Mammary epithelial cell (primary cell): ENCODE measurements at regions of chr4 and their contacts with region 1.

Region 1: GRCh38 chr4:78775303-78776030 is 683 bp upstream of the BMP2K start:
- DNase-seq: peak; percentile 72
- H3K4me3 ChIP-seq: peak overlapping the region; percentile 77 to 91 (median 89)
- H3K27ac ChIP-seq: peak overlapping the region; percentile 90
- H3K4me1 ChIP-seq: peaks cover 8% of the 10 kb centered on the region
- H3K27me3 ChIP-seq: no peaks in the 10 kb centered on the region
- CTCF ChIP-seq: no peak

Region 2: GRCh38 chr4:78612398-78613178 is 162.9 kb before region 1 on chr4:
- CTCF ChIA-PET with region 1: no interaction called
- dilution Hi-C with region 1: no loop called
- in situ Hi-C with region 1: no loop called
- intact Hi-C with region 1: loop called (anchors 2 kb)
- DNase-seq: no peak
- H3K4me3 ChIP-seq: no peak overlapping the region
- H3K27ac ChIP-seq: no peak overlapping the region
- H3K4me1 ChIP-seq: peaks cover 4% of the 10 kb centered on the region
- H3K27me3 ChIP-seq: no peaks in the 10 kb centered on the region
- CTCF ChIP-seq: peak; percentile 33 to 66

Region 3: DNA sequence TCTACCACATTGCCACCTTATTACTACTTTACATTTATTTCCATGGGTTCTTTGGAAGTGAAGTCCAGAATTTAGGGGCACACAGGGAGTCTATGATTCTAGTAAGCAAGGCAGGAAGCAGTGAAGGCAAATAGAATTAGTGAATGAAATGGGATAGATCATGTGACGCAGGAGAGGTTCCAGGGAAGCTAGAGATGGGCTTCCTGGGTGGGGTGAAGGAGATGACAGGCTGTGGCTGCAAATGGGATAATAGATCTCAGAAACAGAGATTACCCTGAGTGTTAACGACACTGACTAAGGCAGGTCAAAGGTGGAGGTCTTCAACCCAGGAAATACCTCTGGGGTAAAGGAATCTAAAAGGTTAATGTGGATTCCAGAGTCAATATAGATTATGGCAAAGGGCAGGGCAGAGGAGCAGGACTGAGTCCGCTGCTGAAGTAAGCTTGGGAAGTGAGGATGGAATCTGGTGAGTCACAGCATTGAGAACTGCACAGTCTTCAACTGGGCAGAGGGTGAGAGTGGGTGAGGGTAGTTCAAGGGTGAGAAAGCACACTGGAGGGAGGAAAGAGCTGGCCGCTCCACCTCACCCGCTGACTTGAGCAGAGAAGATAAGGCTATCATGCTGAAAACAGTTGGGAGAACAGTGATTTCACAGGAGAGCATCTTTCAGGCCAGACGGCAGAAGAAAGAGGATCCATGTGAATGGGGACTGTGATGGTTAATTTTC is 153.1 kb before region 1 on chr4:
- CTCF ChIA-PET with region 1: no interaction called
- dilution Hi-C with region 1: no loop called
- in situ Hi-C with region 1: loop called in 1 of 2 experiments (anchors 10 kb)
- intact Hi-C with region 1: no loop called
- DNase-seq: no peak
- H3K4me3 ChIP-seq: no peak overlapping the region
- H3K27ac ChIP-seq: no peak overlapping the region
- H3K4me1 ChIP-seq: peaks cover 4% of the 10 kb centered on the region
- H3K27me3 ChIP-seq: no peaks in the 10 kb centered on the region
- CTCF ChIP-seq: no peak

Region 4: GRCh38 chr4:78644744-78645330 is 130.6 kb before region 1 on chr4:
- CTCF ChIA-PET with region 1: no interaction called
- dilution Hi-C with region 1: no loop called
- in situ Hi-C with region 1: no loop called
- intact Hi-C with region 1: loop called (anchors 1 kb)
- DNase-seq: peak; percentile 71
- H3K4me3 ChIP-seq: no peak overlapping the region
- H3K27ac ChIP-seq: peak overlapping the region; percentile 79
- H3K4me1 ChIP-seq: peaks cover 28% of the 10 kb centered on the region
- H3K27me3 ChIP-seq: no peaks in the 10 kb centered on the region
- CTCF ChIP-seq: peak; percentile 98 to 99

Region 5: GRCh38 chr4:78710536-78710935 is 64.9 kb before region 1 on chr4:
- CTCF ChIA-PET with region 1: no interaction called
- dilution Hi-C with region 1: no loop called
- in situ Hi-C with region 1: no loop called
- intact Hi-C with region 1: loop called (anchors 2 kb)
- DNase-seq: peak; percentile 89
- H3K4me3 ChIP-seq: no peak overlapping the region
- H3K27ac ChIP-seq: no peak overlapping the region
- H3K4me1 ChIP-seq: no peaks in the 10 kb centered on the region
- H3K27me3 ChIP-seq: no peaks in the 10 kb centered on the region
- CTCF ChIP-seq: no peak

Region 6: GRCh38 chr4:78864405-78865024 is 89.0 kb after region 1 on chr4:
- CTCF ChIA-PET with region 1: interaction called, 3 read pairs
- dilution Hi-C with region 1: no loop called
- in situ Hi-C with region 1: no loop called
- intact Hi-C with region 1: loop called (anchors 2 kb)
- DNase-seq: peak; percentile 58
- H3K4me3 ChIP-seq: no peak overlapping the region
- H3K27ac ChIP-seq: no peak overlapping the region
- H3K4me1 ChIP-seq: no peaks in the 10 kb centered on the region
- H3K27me3 ChIP-seq: no peaks in the 10 kb centered on the region
- CTCF ChIP-seq: peak; percentile 73